ENCODE measurements at regions of chr1 and their contacts with region 1.

Region 1: GRCh38 chr1:205396967-205397616 is 24.8 kb downstream of the LEMD1 start:
- DNase-seq: no peak
- ATAC-seq: no peak
- H3K4me3 ChIP-seq: no peak overlapping the region
- H3K27ac ChIP-seq: no peak overlapping the region
- H3K4me1 ChIP-seq: no peaks in the 10 kb centered on the region
- H3K27me3 ChIP-seq: no peaks in the 10 kb centered on the region

Region 2: DNA sequence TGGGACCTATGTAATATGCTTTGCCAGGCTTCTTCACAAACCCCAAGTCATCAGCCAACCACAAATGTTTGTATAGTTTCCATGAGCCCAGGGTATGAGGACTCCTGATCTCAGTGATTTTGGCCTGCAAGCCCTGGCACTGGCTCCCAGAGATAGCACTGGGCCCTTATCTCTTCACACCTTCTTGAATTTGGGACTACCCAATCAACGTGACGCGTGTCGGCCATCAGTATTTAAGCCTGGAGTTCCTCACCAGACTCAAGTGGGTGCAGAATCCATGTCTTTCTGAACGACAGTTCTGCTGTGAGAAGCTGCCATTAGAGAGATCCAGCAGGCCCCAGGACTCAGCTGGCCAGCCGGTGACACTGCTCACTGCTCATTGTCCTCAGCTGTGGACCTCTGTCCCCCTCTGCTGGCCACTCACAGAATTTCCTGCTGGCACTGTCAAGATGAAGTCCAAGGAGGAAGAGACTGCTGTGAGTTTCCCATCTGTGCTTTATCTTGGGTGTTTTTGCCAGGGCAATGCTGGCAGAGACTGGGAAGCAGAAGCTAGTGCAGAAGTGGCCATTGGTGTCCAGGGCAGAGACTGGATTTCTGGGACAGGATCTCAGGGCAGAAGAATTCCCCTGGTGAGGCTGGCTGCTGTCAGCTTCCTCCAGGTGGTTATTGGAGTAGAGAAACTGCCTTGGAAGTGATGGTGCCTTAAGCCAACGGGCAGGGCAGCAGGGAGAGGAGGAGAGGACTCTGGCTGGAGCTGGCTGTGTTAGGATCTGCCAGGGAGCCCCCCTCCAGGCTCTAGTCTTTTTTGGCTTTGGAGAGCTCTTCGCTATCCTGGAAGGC is 140.9 kb before region 1 on chr1:
- intact Hi-C with region 1: no loop called
- DNase-seq: peak; percentile 94 to 95
- ATAC-seq: peak; percentile 93
- H3K4me3 ChIP-seq: no peak overlapping the region
- H3K27ac ChIP-seq: peak overlapping the region in 1 of 2 donors; percentile 4
- H3K4me1 ChIP-seq: no peaks in the 10 kb centered on the region
- H3K27me3 ChIP-seq: no peaks in the 10 kb centered on the region

Region 3: GRCh38 chr1:205512059-205513045 is 115.3 kb after region 1 on chr1:
- intact Hi-C with region 1: no loop called
- DNase-seq: peak; percentile 88 to 90
- ATAC-seq: peak; percentile 83
- H3K4me3 ChIP-seq: no peak overlapping the region
- H3K27ac ChIP-seq: peak overlapping the region; percentile 43 to 72
- H3K4me1 ChIP-seq: no peaks in the 10 kb centered on the region
- H3K27me3 ChIP-seq: no peaks in the 10 kb centered on the region

Region 4: DNA sequence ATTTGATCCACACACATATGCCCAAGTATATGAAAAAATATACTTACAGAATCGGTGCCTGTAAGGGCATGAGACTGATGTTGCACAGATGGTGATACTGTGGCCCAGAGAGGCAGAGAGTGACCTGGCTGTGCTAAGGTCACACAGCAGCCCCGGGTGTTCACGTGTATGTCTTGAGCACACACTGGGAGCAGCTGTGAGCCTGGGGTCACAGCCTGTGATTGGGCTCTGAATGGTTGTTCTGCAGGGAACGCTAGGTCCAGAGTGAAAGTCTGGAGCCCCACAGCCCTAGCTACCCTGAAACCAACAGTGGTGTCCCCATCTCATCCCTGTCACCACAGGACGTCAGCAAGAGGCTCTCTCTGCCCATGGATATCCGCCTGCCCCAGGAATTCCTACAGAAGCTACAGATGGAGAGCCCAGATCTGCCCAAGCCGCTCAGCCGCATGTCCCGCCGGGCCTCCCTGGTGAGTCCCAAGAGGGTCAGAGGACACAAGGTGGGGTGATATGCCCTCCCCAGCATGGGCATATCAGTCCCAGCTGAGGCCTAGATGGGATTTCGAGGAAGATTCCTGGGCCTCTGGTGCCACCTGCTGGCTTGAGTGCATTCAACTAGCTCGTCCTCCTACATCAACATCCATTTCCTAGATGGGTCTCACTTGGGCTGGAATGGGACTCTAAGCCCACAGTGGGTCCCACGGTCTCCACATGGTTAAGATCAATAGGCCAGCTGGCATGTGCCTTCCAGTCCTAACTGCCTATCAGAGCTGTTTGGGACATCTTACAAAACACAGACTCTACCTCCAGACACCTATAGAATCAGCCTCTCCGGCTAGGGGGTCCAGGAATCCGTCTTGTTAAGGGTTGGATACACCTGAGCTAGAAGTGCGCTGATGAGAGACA is 127.0 kb after region 1 on chr1:
- intact Hi-C with region 1: loop called in 1 of 2 experiments (anchors 5 kb)
- DNase-seq: peak; percentile 82 to 94
- ATAC-seq: peak; percentile 71
- H3K4me3 ChIP-seq: no peak overlapping the region
- H3K27ac ChIP-seq: no peak overlapping the region
- H3K4me1 ChIP-seq: no peaks in the 10 kb centered on the region
- H3K27me3 ChIP-seq: no peaks in the 10 kb centered on the region

Region 5: GRCh38 chr1:205534444-205534985 is 137.4 kb after region 1 on chr1:
- intact Hi-C with region 1: no loop called
- DNase-seq: peak in 1 of 2 donors; percentile 38
- ATAC-seq: no peak
- H3K4me3 ChIP-seq: no peak overlapping the region
- H3K27ac ChIP-seq: no peak overlapping the region
- H3K4me1 ChIP-seq: no peaks in the 10 kb centered on the region
- H3K27me3 ChIP-seq: no peaks in the 10 kb centered on the region

Measured in aorta (tissue), 5 donors.